ENCODE measurements at regions of chr5 and their contacts with region 1.

Region 1: GRCh38 chr5:95846554-95847260 is 24.2 kb upstream of the GLRX start:
- DNase-seq: peak; percentile 77
- ATAC-seq: peak; percentile 57
- H3K4me3 Mint-ChIP-seq: no peak overlapping the region
- H3K27ac Mint-ChIP-seq: no peak overlapping the region
- H3K4me1 Mint-ChIP-seq: peaks cover 36% of the 10 kb centered on the region
- H3K27me3 Mint-ChIP-seq: peaks cover 21% of the 10 kb centered on the region

Region 2: DNA sequence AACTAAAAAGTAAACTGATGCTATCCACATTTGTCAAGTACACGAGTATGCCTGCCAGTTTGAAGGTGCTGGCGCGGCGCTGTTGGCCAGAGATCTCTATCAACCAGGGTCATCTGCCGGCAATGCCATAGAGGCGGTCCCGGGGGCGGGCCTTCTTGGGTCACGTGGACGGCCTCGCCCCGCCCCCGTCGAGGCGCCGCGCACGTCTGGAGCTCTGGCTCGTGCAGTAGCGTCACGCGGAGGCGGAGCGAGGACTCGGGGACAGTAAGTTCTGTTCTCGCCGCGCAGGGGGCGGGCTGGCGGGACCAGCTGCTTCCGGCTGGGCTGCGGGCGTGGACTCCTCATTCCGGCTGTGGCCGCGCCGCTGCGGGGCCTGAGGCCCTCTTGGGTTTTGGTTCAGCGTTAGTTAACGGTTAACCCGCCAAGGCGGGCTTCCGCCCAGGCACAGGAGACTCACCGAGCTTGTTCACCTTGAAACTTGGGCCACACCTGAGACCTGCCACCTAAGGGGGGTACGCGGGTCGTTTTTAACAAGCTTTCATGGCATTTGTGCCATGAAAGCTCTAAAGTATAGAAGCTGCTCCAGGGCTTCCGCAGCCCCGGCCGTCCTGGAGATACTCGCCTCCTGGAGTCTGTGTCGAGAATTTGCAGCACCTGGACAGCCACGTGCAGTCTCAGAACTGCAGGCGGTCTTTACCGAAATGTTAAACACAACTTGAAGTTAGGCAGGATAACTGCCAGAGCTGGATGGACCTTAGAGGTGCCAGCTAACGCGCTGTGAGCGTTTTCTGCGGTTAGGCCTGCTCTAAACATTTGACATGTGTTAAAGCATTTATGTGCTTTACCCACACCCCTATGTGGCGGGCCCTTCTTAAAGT is 199.9 kb before region 1 on chr5 and contains the start of gene RFESD:
- CTCF ChIA-PET with region 1: interaction called, 14 read pairs
- POLR2A ChIA-PET with region 1: no interaction called
- DNase-seq: peak; percentile 97
- ATAC-seq: peak; percentile 97
- H3K4me3 Mint-ChIP-seq: peak within 1 kb of the TSS; percentile 78
- H3K27ac Mint-ChIP-seq: peak within 1 kb of the TSS; percentile 88
- H3K4me1 Mint-ChIP-seq: peaks cover 36% of the 10 kb centered on the region
- H3K27me3 Mint-ChIP-seq: no peaks in the 10 kb centered on the region
- total RNA-seq, gene RFESD: 4.9 to 5.1 TPM

Region 3: DNA sequence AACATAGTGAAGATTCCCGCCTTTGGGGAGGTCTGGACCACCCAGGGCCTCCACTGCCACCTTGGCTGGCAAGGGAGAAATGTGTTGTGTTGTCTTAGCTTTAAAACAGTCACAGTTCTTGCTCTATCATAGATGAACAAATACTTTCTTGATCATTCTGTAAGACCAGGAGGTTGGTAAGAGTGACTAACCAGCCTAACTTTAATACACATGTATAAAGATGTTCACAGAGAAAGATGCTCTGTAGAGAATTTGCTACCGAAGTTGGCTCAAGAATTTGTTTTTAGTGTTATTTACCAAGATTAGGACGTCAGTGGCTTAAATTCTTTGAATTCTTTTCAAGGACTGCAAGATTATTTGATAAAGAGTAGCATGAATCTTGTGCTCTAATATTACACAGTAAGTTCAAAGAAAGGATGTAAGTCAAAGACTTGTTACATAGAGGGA is 52.6 kb before region 1 on chr5:
- CTCF ChIA-PET with region 1: interaction called, 10 read pairs
- POLR2A ChIA-PET with region 1: no interaction called
- DNase-seq: no peak
- ATAC-seq: no peak
- H3K4me3 Mint-ChIP-seq: no peak overlapping the region
- H3K27ac Mint-ChIP-seq: no peak overlapping the region
- H3K4me1 Mint-ChIP-seq: peaks cover 7% of the 10 kb centered on the region
- H3K27me3 Mint-ChIP-seq: peaks cover 2% of the 10 kb centered on the region

Region 4: GRCh38 chr5:95817440-95817839 is 29.3 kb before region 1 on chr5:
- CTCF ChIA-PET with region 1: interaction called, 18 read pairs
- POLR2A ChIA-PET with region 1: no interaction called
- DNase-seq: no peak
- ATAC-seq: no peak
- H3K4me3 Mint-ChIP-seq: peak overlapping the region; percentile 69
- H3K27ac Mint-ChIP-seq: peak overlapping the region; percentile 69
- H3K4me1 Mint-ChIP-seq: peaks cover 76% of the 10 kb centered on the region
- H3K27me3 Mint-ChIP-seq: no peaks in the 10 kb centered on the region

Region 5: DNA sequence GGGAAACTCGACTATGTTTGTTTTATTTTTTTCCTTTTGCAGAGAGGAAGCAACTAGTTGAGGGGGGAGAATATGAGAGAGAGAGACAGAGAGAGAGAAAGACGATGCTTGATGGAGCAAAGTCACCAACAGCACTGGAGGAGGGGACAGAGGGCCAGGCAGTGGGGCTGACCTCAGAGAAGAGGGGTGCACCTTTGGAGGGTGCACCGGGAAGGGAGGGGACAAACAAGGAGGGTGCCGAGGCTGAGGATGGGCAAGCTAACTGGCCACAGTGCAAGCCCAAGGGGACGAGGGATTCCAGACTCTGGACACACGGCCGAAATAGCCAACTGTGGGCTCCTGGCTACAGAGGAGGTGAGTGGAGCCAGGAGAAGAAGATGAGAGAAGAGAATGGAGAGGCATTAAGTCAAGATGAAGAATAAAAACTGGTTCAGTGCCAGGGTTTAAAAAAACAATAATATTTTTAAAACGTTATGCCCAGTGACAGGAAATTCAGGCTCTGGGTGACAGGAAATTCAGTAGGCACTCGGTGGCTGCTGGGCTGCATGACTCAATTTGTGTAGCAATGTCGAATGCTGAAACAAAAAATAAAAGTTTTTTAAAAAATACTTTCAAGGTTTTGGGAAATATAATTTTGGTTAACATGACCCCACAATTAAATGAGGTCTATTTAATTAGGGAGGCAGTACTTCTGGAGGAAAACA is 10.9 kb before region 1 on chr5:
- CTCF ChIA-PET with region 1: interaction called, 39 read pairs
- POLR2A ChIA-PET with region 1: interaction called, 5 read pairs
- DNase-seq: no peak
- ATAC-seq: no peak
- H3K4me3 Mint-ChIP-seq: peak overlapping the region; percentile 80
- H3K27ac Mint-ChIP-seq: peak overlapping the region; percentile 94
- H3K4me1 Mint-ChIP-seq: peaks cover 60% of the 10 kb centered on the region
- H3K27me3 Mint-ChIP-seq: no peaks in the 10 kb centered on the region

Region 6: GRCh38 chr5:95927927-95928723 is 81.4 kb after region 1 on chr5:
- CTCF ChIA-PET with region 1: no interaction called
- POLR2A ChIA-PET with region 1: no interaction called
- DNase-seq: no peak
- ATAC-seq: peak; percentile 32
- H3K4me3 Mint-ChIP-seq: peak overlapping the region; percentile 1
- H3K27ac Mint-ChIP-seq: peak overlapping the region; percentile 36
- H3K4me1 Mint-ChIP-seq: peaks cover 49% of the 10 kb centered on the region
- H3K27me3 Mint-ChIP-seq: no peaks in the 10 kb centered on the region

Measured in activated CD8-positive, alpha-beta T cell treated with anti-CD3 and anti-CD28 coated beads, Interleukin-2, amount 10 ng/mL, durations not matched to agents 7 days and 5 days (primary cell).